Common myeloid progenitor, CD34-positive (primary cell): ENCODE measurements at regions of chr5 and their contacts with region 1.

Region 1: DNA sequence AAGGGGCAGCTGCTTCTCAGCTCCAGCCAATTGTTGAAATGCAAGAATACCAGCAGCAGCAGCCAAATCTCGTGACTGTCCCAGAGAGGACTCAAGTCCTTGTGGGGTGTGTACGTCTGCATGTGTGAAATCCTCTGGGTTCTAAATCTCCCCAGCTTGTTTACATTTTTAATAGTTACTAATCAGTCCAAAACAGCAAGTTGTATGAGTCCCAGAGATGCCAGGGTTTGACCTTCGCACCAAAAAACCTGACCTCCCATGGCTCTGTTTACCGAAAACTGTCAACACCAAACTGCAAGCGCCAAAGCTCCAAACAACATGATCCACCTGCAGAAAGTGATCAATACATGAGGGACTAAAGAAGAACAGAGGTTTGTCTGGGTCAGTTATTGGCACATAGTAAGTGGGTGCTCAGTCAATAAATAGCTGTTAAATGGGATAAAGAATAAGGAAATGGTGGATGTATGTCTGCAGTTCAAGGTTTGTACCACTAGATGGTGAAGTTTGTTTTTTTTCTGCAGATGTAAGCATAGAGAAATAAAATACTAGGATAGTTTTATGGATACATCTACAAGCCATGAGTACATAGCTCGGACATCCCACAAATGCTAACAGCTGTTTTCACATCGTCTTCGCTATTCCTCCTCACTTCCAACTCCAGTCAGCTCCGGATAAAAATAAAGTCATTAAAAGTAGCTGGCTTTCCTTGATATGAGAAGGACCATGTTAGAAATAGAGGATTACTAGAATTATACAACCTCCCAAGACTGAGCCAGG is 85.3 kb upstream of the ADRB2 start:
- DNase-seq: peak; percentile 72 to 81 (median 74)
- H3K4me3 ChIP-seq: no peak overlapping the region
- H3K27ac ChIP-seq: no peak overlapping the region
- H3K4me1 ChIP-seq: peaks cover 0 to 15% (median 3%) of the 10 kb centered on the region in 4 experiments
- H3K27me3 ChIP-seq: no peaks in the 10 kb centered on the region

Region 2: GRCh38 chr5:148820461-148821395 is 79.6 kb after region 1 on chr5:
- CTCF ChIA-PET with region 1: interaction called, 49 read pairs
- POLR2A ChIA-PET with region 1: no interaction called
- DNase-seq: peak in 2 of 3 donors; percentile 41 to 42
- H3K4me3 ChIP-seq: no peak overlapping the region
- H3K27ac ChIP-seq: no peak overlapping the region
- H3K4me1 ChIP-seq: peaks cover 5 to 34% (median 19%) of the 10 kb centered on the region in 4 experiments
- H3K27me3 ChIP-seq: no peaks in the 10 kb centered on the region

Region 3: DNA sequence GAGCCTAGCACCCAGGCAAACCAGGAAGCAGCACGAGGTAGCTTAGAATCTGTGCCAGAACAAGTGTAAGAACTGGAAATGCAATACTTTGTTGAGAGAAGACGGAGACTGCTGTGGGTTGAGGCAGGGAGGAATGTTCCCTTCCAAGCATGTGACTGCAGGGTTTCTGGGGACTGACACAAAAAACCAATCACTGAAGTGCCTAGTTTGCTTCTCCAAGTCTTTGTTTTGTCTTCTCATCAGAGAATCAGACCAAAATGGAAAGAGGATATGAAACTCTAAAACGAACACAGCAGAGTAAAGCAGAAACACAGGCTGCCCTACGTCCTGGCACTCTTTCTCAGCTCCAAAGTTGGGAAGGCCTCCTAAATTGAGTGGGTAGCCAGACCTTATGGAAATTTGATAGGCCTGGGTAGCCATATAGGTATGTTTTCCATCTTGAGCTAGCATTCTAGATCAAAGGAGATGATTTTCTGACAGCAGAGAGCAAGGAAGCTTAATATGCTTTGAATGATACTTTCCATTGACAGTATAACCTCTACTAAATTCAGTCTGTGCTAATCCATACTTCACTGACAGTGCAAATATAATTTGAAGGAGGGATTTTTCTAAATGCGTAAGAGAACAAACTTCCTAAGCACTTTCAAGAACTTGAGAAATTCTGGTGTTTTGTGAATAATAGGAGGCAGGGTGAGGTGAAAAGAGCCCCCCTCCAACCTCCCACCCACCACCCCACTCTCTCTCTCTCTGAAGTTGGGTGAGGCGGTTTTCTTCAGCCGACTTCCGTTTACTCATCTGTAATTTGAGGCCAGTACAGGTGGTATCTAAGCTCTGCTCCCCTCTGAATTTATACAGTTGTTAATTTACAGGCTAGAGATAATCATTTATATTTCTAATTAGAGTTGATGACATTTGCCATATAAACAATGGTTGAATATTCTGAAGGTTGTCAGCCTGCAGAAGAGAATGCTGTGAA is 90.7 kb after region 1 on chr5:
- CTCF ChIA-PET with region 1: interaction called, 15 read pairs
- POLR2A ChIA-PET with region 1: no interaction called
- DNase-seq: no peak
- H3K4me3 ChIP-seq: peak overlapping the region in 1 of 7 experiments; percentile 28
- H3K27ac ChIP-seq: no peak overlapping the region
- H3K4me1 ChIP-seq: peaks cover 2 to 24% (median 7%) of the 10 kb centered on the region in 4 experiments
- H3K27me3 ChIP-seq: peaks cover 0 to 2% (median 0%) of the 10 kb centered on the region in 5 experiments

Region 4: GRCh38 chr5:148952097-148952867 is 211.1 kb after region 1 on chr5:
- CTCF ChIA-PET with region 1: interaction called, 361 read pairs
- POLR2A ChIA-PET with region 1: interaction called, 3 read pairs
- DNase-seq: peak; percentile 41 to 65 (median 49)
- H3K4me3 ChIP-seq: no peak overlapping the region
- H3K27ac ChIP-seq: no peak overlapping the region
- H3K4me1 ChIP-seq: peaks cover 0 to 20% (median 5%) of the 10 kb centered on the region in 4 experiments
- H3K27me3 ChIP-seq: peaks cover 0 to 2% (median 0%) of the 10 kb centered on the region in 5 experiments

Region 5: DNA sequence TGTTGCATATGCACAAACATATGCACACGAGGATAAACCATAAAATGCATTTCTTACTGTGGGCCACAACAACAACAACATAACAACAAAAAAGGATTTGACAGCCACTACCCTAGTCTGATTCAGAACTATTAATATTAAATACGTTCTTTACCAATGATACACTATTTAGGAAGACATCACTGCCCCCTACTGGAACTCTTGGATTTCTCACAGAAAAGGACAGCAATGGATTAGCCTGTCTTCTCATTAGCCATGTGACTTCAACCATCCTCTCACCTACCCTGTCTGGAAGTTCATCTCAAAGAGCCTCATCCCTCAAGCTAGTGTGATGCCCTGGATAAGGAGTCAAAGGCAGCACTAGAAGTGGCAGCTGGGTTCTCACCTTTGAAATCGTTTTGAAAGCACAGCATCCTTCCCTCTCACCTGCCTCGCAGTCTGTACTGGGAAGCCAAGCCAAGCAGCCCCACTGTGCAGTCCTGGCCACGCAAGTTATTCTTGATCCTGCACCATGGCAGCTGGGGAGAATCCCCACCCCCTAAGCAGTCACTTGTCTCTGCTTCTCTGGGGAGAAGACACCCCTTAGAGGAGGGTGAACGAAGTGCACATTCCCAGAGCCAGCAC is 257.1 kb after region 1 on chr5:
- CTCF ChIA-PET with region 1: interaction called, 96 read pairs
- POLR2A ChIA-PET with region 1: no interaction called
- DNase-seq: peak; percentile 59 to 74 (median 70)
- H3K4me3 ChIP-seq: no peak overlapping the region
- H3K27ac ChIP-seq: no peak overlapping the region
- H3K4me1 ChIP-seq: no peaks in the 10 kb centered on the region
- H3K27me3 ChIP-seq: no peaks in the 10 kb centered on the region

Region 6: DNA sequence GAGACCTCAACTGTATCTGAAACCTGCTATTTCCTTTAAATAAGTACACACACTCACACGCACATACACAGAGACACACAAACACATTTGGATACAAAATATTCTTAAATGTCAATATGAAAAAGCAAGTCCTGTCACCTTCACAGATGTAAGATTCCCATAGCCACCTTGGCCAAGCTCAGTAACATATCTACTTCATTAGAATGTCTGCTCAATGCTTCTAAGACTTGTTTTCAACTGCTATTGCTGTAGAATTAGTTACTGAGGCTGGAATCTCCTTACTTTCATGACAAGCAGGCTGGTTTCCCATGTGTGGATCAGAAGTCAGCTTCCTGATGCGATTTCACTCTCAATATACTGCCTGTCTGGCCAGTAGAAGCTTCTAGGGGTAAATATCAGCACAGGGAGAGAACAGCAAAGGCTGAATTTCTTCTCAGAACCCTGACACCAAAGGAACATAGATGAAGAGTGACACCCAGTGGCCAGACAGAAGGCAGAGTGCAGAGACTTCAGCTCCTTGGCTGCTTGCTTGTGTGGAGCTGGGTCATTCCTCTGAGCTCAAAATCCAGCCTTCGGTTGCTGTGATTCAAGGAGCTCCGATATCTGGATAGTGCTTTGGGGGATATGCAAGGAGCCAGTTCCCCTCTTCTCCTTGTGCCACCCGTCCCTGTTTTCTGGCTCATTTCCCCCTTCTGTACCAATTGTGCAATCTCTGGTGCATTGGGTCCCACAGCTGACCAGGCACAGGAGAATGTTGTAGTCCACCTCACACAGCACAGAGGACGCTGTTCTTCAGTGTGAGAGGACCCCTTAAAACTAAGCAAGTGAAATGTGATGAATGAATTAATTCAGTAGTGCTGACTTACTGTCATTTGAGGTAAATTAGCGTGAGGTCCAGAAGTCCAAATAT is 373.5 kb after region 1 on chr5:
- CTCF ChIA-PET with region 1: interaction called, 107 read pairs
- POLR2A ChIA-PET with region 1: no interaction called
- DNase-seq: peak; percentile 77 to 88 (median 85)
- H3K4me3 ChIP-seq: no peak overlapping the region
- H3K27ac ChIP-seq: no peak overlapping the region
- H3K4me1 ChIP-seq: peaks cover 0 to 8% (median 3%) of the 10 kb centered on the region in 4 experiments
- H3K27me3 ChIP-seq: no peaks in the 10 kb centered on the region